ENCODE measurements at regions of chr1 and their contacts with region 1.

Region 1: GRCh38 chr1:246689409-246690008 is 34.7 kb upstream of the SCCPDH start:
- DNase-seq: peak; percentile 62
- ATAC-seq: peak; percentile 93
- H3K4me3 ChIP-seq: peak overlapping the region; percentile 28 to 50
- H3K27ac ChIP-seq: no peak overlapping the region
- H3K4me1 ChIP-seq: peaks cover 7% of the 10 kb centered on the region; the same call in 1 of the 2 replicates
- H3K27me3 ChIP-seq: no peaks in the 10 kb centered on the region
- CTCF ChIP-seq: peak; percentile 95

Region 2: DNA sequence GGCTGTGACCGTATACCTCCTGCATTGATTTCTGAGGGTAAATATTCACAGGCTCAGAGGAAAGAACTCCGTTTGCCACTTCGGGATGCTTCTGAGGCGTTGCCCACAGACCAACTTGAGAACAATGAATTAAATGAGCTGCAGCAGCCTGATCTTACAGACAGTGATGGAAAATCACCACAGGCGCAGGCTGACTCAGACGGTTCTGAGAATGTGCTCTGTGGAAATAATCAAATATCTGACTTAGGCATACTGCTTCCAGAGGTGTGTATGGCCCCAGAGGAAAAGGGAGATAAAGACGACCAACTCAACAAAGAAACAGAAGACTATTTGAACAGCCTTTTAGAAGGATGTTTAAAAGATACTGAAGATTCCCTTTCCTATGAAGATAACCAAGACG is 42.0 kb before region 1 on chr1:
- CTCF ChIA-PET with region 1: interaction called, 8 read pairs
- POLR2A ChIA-PET with region 1: interaction called, 11 read pairs
- in situ Hi-C with region 1: no loop called
- intact Hi-C with region 1: no loop called
- DNase-seq: no peak
- ATAC-seq: peak; percentile 53
- H3K4me3 ChIP-seq: no peak overlapping the region
- H3K27ac ChIP-seq: no peak overlapping the region
- H3K4me1 ChIP-seq: no peaks in the 10 kb centered on the region
- H3K27me3 ChIP-seq: no peaks in the 10 kb centered on the region
- CTCF ChIP-seq: no peak

Region 3: GRCh38 chr1:246753670-246754535 is 64.4 kb after region 1 on chr1:
- CTCF ChIA-PET with region 1: no interaction called
- POLR2A ChIA-PET with region 1: no interaction called
- in situ Hi-C with region 1: no loop called
- intact Hi-C with region 1: loop called (anchors 5 kb)
- DNase-seq: peak; percentile 27
- ATAC-seq: peak; percentile 94
- H3K4me3 ChIP-seq: no peak overlapping the region
- H3K27ac ChIP-seq: no peak overlapping the region
- H3K4me1 ChIP-seq: 0 out of 2 replicates have a peak, but pooled peaks cover 2% of the 10 kb centered on the region
- H3K27me3 ChIP-seq: no peaks in the 10 kb centered on the region
- CTCF ChIP-seq: peak; percentile 87

Region 4: GRCh38 chr1:246768403-246769020 is 79.0 kb after region 1 on chr1:
- CTCF ChIA-PET with region 1: no interaction called
- POLR2A ChIA-PET with region 1: no interaction called
- in situ Hi-C with region 1: no loop called
- intact Hi-C with region 1: no loop called
- DNase-seq: no peak
- ATAC-seq: no peak
- H3K4me3 ChIP-seq: no peak overlapping the region
- H3K27ac ChIP-seq: no peak overlapping the region
- H3K4me1 ChIP-seq: no peaks in the 10 kb centered on the region
- H3K27me3 ChIP-seq: no peaks in the 10 kb centered on the region
- CTCF ChIP-seq: no peak